Heart right ventricle (tissue), 16 donors: ENCODE measurements at regions of chr2 and their contacts with region 1.

Region 1: GRCh38 chr2:142989273-142990204 is 112.1 kb downstream of the KYNU start:
- DNase-seq: no peak
- ATAC-seq: no peak
- H3K4me3 ChIP-seq: no peak overlapping the region
- H3K27ac ChIP-seq: no peak overlapping the region
- H3K4me1 ChIP-seq: peaks cover 0 to 5% (median 0%) of the 10 kb centered on the region in 9 donors
- H3K27me3 ChIP-seq: peaks cover 0 to 10% (median 0%) of the 10 kb centered on the region in 7 donors
- CTCF ChIP-seq: peak in 8 of 9 donors; percentile 33 to 73 (median 58)

Region 2: DNA sequence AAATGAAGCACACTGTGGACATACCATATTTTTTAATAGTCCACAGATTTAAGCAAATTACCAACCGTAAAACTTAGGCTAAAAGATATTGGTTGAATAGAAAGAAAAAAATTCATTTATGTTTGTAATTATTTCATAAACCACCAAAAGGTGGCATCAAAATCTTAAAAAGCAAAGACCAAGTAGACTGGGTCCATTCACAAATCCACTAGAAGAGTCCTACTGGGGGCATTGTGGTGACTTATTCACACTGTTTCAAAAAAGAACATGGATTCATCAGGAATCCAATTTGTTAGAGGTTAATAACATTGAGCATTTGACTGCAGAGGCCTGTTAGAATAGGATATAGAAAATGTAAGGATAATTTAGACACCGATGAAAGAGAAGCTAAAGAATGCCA is 307.0 kb before region 1 on chr2:
- intact Hi-C with region 1: loop called in 8 of 10 experiments (anchors 5 to 10 kb)
- DNase-seq: no peak
- ATAC-seq: no peak
- H3K4me3 ChIP-seq: no peak overlapping the region
- H3K27ac ChIP-seq: no peak overlapping the region
- H3K4me1 ChIP-seq: no peaks in the 10 kb centered on the region
- H3K27me3 ChIP-seq: peaks cover 0 to 5% (median 0%) of the 10 kb centered on the region in 7 donors
- CTCF ChIP-seq: peak in 5 of 9 donors; percentile 18 to 53 (median 28)

Region 3: GRCh38 chr2:142796161-142796560 is 193.4 kb before region 1 on chr2:
- intact Hi-C with region 1: loop called in 2 of 10 experiments (anchors 5 to 10 kb)
- DNase-seq: no peak
- ATAC-seq: peak in 1 of 8 donors; percentile 39
- H3K4me3 ChIP-seq: no peak overlapping the region
- H3K27ac ChIP-seq: peak overlapping the region in 1 of 10 donors; percentile 19
- H3K4me1 ChIP-seq: peaks cover 0 to 7% (median 0%) of the 10 kb centered on the region in 9 donors
- H3K27me3 ChIP-seq: no peaks in the 10 kb centered on the region
- CTCF ChIP-seq: peak in 3 of 9 donors; percentile 18 to 48 (median 21)